OCI-LY7 (cell line): ENCODE measurements at regions of chr11 and their contacts with region 1.

Region 1: GRCh38 chr11:107858217-107859070 is at the start of gene SLC35F2:
- DNase-seq: peak; percentile 91
- H3K4me3 ChIP-seq: peak within 1 kb of the TSS; percentile 85
- H3K27ac ChIP-seq: peak within 1 kb of the TSS; percentile 62
- H3K4me1 ChIP-seq: peaks cover 18% of the 10 kb centered on the region
- CTCF ChIP-seq: peak; percentile 54
- total RNA-seq, gene SLC35F2: 20.9 and 23.3 TPM in 2 replicates

Region 2: DNA sequence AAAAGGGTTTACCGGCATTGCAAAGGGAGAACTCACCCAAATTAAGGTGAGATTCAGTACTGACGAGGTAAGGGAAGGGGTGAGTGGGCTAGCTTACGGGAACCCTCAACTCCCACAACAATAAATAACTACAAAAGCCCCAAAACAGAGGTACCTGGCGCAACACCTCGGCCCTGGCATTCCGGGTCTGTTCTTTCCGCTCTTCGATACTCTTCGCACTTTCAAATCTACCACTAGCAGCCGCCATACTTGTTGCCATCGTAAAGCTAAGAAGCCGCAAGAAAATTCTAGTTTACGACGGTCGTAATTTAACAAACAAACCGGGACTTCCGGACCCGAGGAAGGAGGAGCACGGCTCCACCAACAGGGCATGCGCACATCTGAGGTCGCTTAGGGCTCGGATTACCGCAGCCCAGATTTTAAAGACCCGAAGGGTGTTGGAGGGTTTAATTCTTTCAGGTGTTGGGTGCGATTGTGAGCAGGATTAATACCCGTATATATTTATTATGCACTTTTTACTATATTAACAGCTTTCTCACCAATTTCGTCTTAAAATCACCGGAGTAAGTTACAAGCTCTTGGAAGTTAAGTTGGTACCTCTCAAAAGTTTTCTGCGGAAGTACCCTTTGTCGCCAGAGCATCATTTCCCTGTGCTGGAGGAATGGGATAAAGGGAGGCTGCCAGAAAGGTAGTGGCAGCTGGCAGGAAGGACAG is 400.7 kb before region 1 on chr11 and contains the start of gene CWF19L2:
- CTCF ChIA-PET with region 1: no interaction called
- POLR2A ChIA-PET with region 1: no interaction called
- intact Hi-C with region 1: loop called (anchors 5 kb)
- DNase-seq: peak; percentile 98
- H3K4me3 ChIP-seq: peak within 1 kb of the TSS; percentile 92
- H3K27ac ChIP-seq: peak within 1 kb of the TSS; percentile 77
- H3K4me1 ChIP-seq: peaks cover 16% of the 10 kb centered on the region
- CTCF ChIP-seq: 0 out of 2 replicates have a peak, but pooled peaks have one; percentile 11
- total RNA-seq, gene CWF19L2: 13.4 and 20.6 TPM in 2 replicates

Region 3: DNA sequence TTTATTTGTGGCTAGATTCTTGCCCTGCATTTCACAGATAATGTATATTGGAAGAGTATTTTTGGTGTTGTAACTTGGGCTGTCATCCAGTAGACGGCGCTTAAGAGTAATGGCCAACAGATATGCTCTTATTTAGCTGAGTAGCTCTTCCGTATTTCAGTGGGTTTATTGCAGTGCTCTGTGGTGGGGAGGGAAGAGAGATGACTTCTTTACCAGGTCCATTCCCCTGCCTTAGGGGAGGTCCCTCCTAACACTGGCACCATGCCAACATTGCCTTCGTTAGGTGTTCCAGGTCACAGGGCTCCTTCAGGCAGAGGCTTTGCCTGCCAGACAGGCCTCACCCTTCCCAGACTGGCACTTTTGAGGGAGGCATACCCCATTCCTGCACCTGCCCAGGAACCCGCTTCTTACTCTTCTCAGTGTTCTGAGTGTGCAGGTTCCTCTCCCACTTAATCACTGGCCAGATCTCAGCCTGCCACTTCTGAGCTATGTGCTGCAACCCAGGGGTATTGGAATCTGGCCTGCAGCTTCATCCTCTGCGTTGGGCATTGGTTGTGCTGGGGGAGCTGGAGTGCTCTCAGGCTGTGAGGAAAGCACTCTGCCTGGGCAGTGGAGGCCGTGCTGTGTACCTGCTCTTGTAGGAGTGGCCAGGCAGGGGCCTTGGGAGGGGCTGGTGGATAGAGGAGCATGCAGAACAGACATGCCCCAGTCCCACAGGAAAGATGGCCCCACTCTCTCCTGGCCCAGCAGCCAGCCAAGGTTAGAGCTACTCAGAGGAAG is 117.2 kb before region 1 on chr11:
- CTCF ChIA-PET with region 1: no interaction called
- POLR2A ChIA-PET with region 1: no interaction called
- intact Hi-C with region 1: no loop called
- DNase-seq: peak; percentile 42
- H3K4me3 ChIP-seq: no peak overlapping the region
- H3K27ac ChIP-seq: no peak overlapping the region
- H3K4me1 ChIP-seq: no peaks in the 10 kb centered on the region
- CTCF ChIP-seq: peak; percentile 80

Region 4: GRCh38 chr11:107928046-107928766 is 69.8 kb after region 1 on chr11 and contains the start of gene RAB39A:
- CTCF ChIA-PET with region 1: no interaction called
- POLR2A ChIA-PET with region 1: interaction called, 4 read pairs
- intact Hi-C with region 1: loop called (anchors 2 kb)
- DNase-seq: peak; percentile 97
- H3K4me3 ChIP-seq: peak within 1 kb of the TSS; percentile 76
- H3K27ac ChIP-seq: no peak within 1 kb of the TSS
- H3K4me1 ChIP-seq: peaks cover 9% of the 10 kb centered on the region
- CTCF ChIP-seq: no peak
- total RNA-seq, gene RAB39A: 0.15 and 0.60 TPM in 2 replicates

Region 5: GRCh38 chr11:108467091-108467823 is 608.8 kb after region 1 on chr11 and contains the start of gene C11orf65:
- CTCF ChIA-PET with region 1: no interaction called
- POLR2A ChIA-PET with region 1: no interaction called
- intact Hi-C with region 1: loop called (anchors 5 kb)
- DNase-seq: peak; percentile 95
- H3K4me3 ChIP-seq: peak within 1 kb of the TSS; percentile 89
- H3K27ac ChIP-seq: peak within 1 kb of the TSS; percentile 35
- H3K4me1 ChIP-seq: peaks cover 11% of the 10 kb centered on the region
- CTCF ChIP-seq: no peak
- total RNA-seq, gene C11orf65: 0.15 and 0.98 TPM in 2 replicates

Region 6: GRCh38 chr11:108664730-108665525 is 806.5 kb after region 1 on chr11 and contains the start of gene DDX10:
- CTCF ChIA-PET with region 1: no interaction called
- POLR2A ChIA-PET with region 1: interaction called, 3 read pairs
- intact Hi-C with region 1: loop called (anchors 5 kb)
- DNase-seq: peak; percentile 98
- H3K4me3 ChIP-seq: peak within 1 kb of the TSS; percentile 95
- H3K27ac ChIP-seq: peak within 1 kb of the TSS; percentile 88
- H3K4me1 ChIP-seq: peaks cover 67% of the 10 kb centered on the region
- CTCF ChIP-seq: peak; percentile 23; the same call in 1 of the 2 replicates
- total RNA-seq, gene DDX10: 38.0 and 46.5 TPM in 2 replicates